ENCODE measurements at regions of chr16 and their contacts with region 1.

Region 1: DNA sequence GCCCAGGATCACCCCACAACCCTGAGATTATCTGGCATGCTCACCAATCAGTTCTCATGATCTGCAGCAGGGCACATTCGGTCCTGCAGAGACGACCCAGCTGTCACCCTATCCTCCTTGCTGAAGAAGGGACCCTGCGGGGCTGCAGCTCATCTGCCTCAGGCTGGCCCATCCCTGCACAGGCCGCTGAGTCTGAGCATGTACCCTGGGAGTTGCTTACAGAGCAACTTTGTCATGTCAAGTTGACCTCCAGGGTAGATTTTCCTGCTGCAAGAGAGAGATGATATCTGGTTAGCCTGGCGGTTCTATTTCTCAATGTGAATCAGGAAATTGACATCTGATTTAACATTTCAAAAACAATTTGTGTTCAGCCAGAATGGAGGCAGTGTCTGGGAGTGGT is 36.0 kb upstream of the ADCY9 start:
- DNase-seq: no peak
- ATAC-seq: no peak
- H3K4me3 ChIP-seq: no peak overlapping the region
- H3K4me3 Mint-ChIP-seq: no peak overlapping the region
- H3K27ac ChIP-seq: no peak overlapping the region
- H3K27ac Mint-ChIP-seq: no peak overlapping the region
- H3K4me1 ChIP-seq: no peaks in the 10 kb centered on the region
- H3K4me1 Mint-ChIP-seq: no peaks in the 10 kb centered on the region
- H3K27me3 ChIP-seq: no peaks in the 10 kb centered on the region
- H3K27me3 Mint-ChIP-seq: no peaks in the 10 kb centered on the region
- CTCF ChIP-seq: no peak

Region 2: GRCh38 chr16:4232541-4233386 is 80.5 kb after region 1 on chr16:
- CTCF ChIA-PET with region 1: no interaction called
- POLR2A ChIA-PET with region 1: no interaction called
- intact Hi-C with region 1: loop called in 1 of 2 experiments (anchors 10 kb)
- DNase-seq: no peak
- ATAC-seq: no peak
- H3K4me3 ChIP-seq: no peak overlapping the region
- H3K4me3 Mint-ChIP-seq: no peak overlapping the region
- H3K27ac ChIP-seq: no peak overlapping the region
- H3K27ac Mint-ChIP-seq: no peak overlapping the region
- H3K4me1 ChIP-seq: no peaks in the 10 kb centered on the region
- H3K4me1 Mint-ChIP-seq: no peaks in the 10 kb centered on the region
- H3K27me3 ChIP-seq: no peaks in the 10 kb centered on the region
- H3K27me3 Mint-ChIP-seq: peaks cover 16% of the 10 kb centered on the region
- CTCF ChIP-seq: no peak